GM13976 (cell line): ENCODE measurements at regions of chr10 and their contacts with region 1.

Region 1: GRCh38 chr10:90592638-90593302 is 265.1 kb downstream of the HTR7 start:
- DNase-seq: peak; percentile 2
- CTCF ChIP-seq: no peak

Region 2: GRCh38 chr10:89946106-89946505 is 646.7 kb before region 1 on chr10:
- in situ Hi-C with region 1: loop called (anchors 25 kb)
- DNase-seq: no peak
- CTCF ChIP-seq: no peak

Region 3: GRCh38 chr10:91575044-91575610 is 982.4 kb after region 1 on chr10:
- in situ Hi-C with region 1: no loop called
- DNase-seq: no peak
- CTCF ChIP-seq: no peak